ENCODE measurements at regions of chr4 and their contacts with region 1.

Region 1: DNA sequence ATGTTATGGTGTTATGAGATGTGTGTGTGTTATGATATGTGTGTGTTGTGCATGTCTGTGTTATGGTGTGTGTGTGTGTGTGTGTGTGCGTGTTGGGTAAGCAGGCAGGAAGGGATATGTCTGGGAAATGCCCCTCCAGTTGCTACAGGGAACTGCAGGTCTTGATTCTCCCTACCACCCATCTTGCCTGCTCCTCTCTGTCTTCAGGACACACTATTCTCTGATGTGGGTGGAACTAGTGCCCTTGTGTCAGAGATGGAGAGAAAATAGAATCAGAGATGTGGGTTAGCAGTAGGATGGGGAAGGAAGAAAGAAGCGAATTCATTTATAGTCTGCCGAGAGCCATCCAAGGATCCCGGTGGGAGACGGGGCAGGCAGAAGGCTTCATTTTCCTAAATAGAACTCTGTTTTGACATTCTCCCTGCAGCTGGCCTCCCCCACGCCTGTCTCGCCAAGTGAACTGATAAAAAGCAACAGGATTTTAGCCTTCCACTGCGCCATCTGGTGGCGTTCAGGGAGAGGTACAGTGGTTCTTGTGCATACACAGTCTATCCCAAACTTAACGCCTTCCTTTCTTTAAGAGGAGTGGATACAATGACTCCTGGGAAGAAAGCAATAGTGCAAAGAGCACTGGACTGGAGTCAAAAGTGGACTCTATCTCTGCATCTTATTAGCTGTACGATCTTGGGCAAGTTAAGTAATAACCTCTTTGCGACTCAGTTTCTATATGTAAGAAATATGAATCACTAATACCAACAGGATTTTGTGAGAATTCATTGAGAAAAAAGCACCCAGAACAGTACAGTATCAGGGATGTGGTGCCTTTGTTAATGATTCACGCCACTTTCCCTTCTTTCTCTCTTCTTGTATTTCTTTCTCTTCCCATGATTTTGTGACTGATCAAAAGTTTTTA is 14.1 kb upstream of the MGST2 start:
- DNase-seq: peak; percentile 77
- ATAC-seq: peak; percentile 86
- H3K4me3 ChIP-seq: no peak overlapping the region
- H3K27ac ChIP-seq: no peak overlapping the region
- H3K4me1 ChIP-seq: peaks cover 0 to 8% of the 10 kb centered on the region in 2 experiments; a peak in 3 of 4 replicates
- H3K27me3 ChIP-seq: no peaks in the 10 kb centered on the region
- CTCF ChIP-seq: peak; percentile 88 to 92 (median 91)
- POLR2A ChIP-seq: no peak
- RAD21 ChIP-seq: peak; percentile 81

Region 2: DNA sequence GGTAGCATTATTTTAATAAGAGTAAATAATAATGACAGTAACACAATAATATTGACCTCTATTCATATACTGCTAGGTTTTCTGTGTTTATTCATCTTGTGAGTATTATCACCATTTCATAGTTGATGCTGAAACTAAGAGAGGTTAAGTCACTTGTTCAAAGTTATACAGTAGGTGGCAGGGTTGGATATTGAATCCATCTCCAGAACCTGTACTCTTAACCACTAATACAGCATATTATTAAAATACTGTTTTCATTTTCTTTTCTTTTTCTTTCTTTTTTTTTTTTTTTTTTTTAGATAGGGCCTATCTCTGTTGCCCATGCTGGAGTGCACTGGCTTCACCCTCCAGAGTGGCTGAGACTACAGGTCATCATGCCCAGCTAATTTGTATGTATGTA is 467.4 kb before region 1 on chr4:
- CTCF ChIA-PET with region 1: no interaction called
- POLR2A ChIA-PET with region 1: no interaction called
- RAD21 ChIA-PET with region 1: no interaction called
- intact Hi-C with region 1: loop called (anchors 5 kb)
- DNase-seq: no peak
- ATAC-seq: peak; percentile 59
- H3K4me3 ChIP-seq: no peak overlapping the region
- H3K27ac ChIP-seq: no peak overlapping the region
- H3K4me1 ChIP-seq: peaks cover 0 to 9% of the 10 kb centered on the region in 2 experiments; a peak in 3 of 4 replicates
- H3K27me3 ChIP-seq: no peaks in the 10 kb centered on the region
- CTCF ChIP-seq: peak in 1 of 3 experiments; percentile 55; a peak in 1 of 6 replicates
- POLR2A ChIP-seq: no peak
- RAD21 ChIP-seq: peak; percentile 72

Region 3: GRCh38 chr4:139416073-139416673 is 235.4 kb before region 1 on chr4:
- CTCF ChIA-PET with region 1: no interaction called
- POLR2A ChIA-PET with region 1: no interaction called
- RAD21 ChIA-PET with region 1: no interaction called
- intact Hi-C with region 1: loop called (anchors 10 kb)
- DNase-seq: peak; percentile 34
- ATAC-seq: peak; percentile 69
- H3K4me3 ChIP-seq: no peak overlapping the region
- H3K27ac ChIP-seq: no peak overlapping the region
- H3K4me1 ChIP-seq: no peaks in the 10 kb centered on the region
- H3K27me3 ChIP-seq: no peaks in the 10 kb centered on the region
- CTCF ChIP-seq: peak; percentile 48 to 71 (median 52); a peak in 5 of 6 replicates
- POLR2A ChIP-seq: no peak
- RAD21 ChIP-seq: peak; percentile 46

Region 4: DNA sequence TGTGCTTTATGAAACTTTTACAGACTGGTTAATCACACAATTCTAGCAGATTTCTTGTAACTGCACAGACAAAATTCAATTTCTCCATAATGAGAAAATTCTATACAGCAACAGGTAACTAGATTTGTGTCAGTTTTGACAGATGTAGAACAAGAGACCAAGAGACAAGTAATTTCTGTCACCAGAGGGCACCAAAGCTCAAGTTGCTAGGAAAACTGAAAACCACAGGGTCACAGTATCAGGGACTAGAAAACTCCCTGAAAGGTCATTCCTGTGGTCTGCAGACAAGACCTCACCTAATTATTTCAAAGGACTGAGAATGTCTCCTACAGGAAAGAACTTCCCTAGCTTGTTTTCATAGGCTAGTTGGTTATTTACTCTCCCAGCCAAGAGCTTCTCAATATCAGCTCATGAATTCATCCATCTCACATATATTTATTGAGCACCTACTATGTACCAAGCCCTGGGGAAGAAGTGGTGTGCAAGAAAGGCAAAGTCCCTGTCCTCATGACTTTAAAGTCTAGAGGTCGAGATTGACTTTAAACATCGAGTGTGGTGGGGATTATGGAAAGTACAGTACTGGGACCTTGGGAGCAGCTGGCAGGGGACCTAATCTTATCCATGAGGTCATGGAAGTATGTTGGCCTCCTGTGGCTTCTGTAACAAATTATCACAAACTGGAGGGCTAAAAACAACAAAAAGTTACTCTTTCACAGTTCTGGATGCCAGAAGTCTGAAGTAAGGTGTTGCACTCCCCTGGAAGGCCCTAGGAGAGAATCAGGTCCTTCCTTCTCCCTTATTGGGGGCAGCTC is 47.8 kb before region 1 on chr4:
- CTCF ChIA-PET with region 1: interaction called, 26 read pairs
- POLR2A ChIA-PET with region 1: interaction called, 3 read pairs
- RAD21 ChIA-PET with region 1: interaction called, 3 to 5 read pairs
- intact Hi-C with region 1: loop called (anchors 1 kb)
- DNase-seq: peak; percentile 49
- ATAC-seq: peak; percentile 73
- H3K4me3 ChIP-seq: no peak overlapping the region
- H3K27ac ChIP-seq: no peak overlapping the region
- H3K4me1 ChIP-seq: peaks cover 6 to 18% of the 10 kb centered on the region in 2 experiments; a peak in 3 of 4 replicates
- H3K27me3 ChIP-seq: no peaks in the 10 kb centered on the region
- CTCF ChIP-seq: peak; percentile 67 to 76 (median 69); a peak in 5 of 6 replicates
- POLR2A ChIP-seq: no peak
- RAD21 ChIP-seq: peak; percentile 83

Region 5: DNA sequence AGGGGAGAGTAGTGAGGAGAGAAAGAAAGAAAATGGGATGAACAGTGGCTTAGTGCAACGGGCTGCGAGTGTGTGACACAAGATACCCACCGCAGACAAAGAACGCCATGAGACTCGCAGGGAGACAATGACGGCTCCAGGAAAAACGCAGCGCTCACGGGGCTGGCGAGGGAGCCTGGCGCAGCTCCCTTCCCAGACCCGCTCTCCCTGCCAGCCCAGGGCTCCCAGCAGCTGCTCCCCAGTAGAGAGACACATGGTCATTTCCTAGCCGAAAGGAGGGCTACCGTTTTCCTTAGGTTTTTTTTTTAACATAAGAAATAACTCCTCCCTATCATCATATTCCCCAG is 353.0 kb after region 1 on chr4:
- CTCF ChIA-PET with region 1: no interaction called
- POLR2A ChIA-PET with region 1: no interaction called
- RAD21 ChIA-PET with region 1: no interaction called
- intact Hi-C with region 1: loop called (anchors 10 kb)
- DNase-seq: no peak
- ATAC-seq: no peak
- H3K4me3 ChIP-seq: no peak overlapping the region
- H3K27ac ChIP-seq: no peak overlapping the region
- H3K4me1 ChIP-seq: no peaks in the 10 kb centered on the region
- H3K27me3 ChIP-seq: 0 out of 2 replicates have a peak, but pooled peaks cover 3% of the 10 kb centered on the region
- CTCF ChIP-seq: no peak
- POLR2A ChIP-seq: no peak
- RAD21 ChIP-seq: no peak

Measured in HCT116 (cell line).